Activated CD8-positive, alpha-beta T cell treated with anti-CD3 and anti-CD28 coated beads, Interleukin-2, amount 10 ng/mL, durations not matched to agents 7 days and 5 days (primary cell): ENCODE measurements at regions of chr3 and their contacts with region 1.

Region 1: GRCh38 chr3:150603153-150603979 is at the start of gene SELENOT:
- DNase-seq: peak; percentile 95
- ATAC-seq: peak; percentile 92
- H3K4me3 Mint-ChIP-seq: peak within 1 kb of the TSS; percentile 92
- H3K27ac Mint-ChIP-seq: peak within 1 kb of the TSS; percentile 99
- H3K4me1 Mint-ChIP-seq: peaks cover 66% of the 10 kb centered on the region
- H3K27me3 Mint-ChIP-seq: no peaks in the 10 kb centered on the region
- total RNA-seq, gene SELENOT: 99.8 to 104 TPM

Region 2: DNA sequence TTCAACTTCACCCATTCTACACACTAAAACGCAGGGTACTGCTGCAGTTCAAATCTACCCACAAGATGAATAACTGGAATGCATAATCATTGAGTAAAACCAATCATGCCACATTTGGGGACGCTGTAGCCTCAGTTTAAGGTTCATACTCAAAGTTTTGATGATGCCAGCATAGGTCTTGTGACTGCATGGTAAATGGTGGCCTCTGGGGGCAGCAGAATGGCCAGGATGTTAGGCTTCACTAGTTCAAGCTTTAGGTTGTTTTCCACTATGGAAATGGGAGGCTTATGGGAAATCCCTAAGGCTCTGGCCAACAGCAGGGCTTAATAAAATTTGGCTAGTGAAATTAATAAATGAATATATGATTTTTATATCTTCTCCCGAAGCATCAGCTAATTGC is 299.6 kb before region 1 on chr3:
- CTCF ChIA-PET with region 1: no interaction called
- POLR2A ChIA-PET with region 1: no interaction called
- DNase-seq: no peak
- ATAC-seq: no peak
- H3K4me3 Mint-ChIP-seq: no peak overlapping the region
- H3K27ac Mint-ChIP-seq: no peak overlapping the region
- H3K4me1 Mint-ChIP-seq: no peaks in the 10 kb centered on the region
- H3K27me3 Mint-ChIP-seq: peaks cover 39% of the 10 kb centered on the region

Region 3: DNA sequence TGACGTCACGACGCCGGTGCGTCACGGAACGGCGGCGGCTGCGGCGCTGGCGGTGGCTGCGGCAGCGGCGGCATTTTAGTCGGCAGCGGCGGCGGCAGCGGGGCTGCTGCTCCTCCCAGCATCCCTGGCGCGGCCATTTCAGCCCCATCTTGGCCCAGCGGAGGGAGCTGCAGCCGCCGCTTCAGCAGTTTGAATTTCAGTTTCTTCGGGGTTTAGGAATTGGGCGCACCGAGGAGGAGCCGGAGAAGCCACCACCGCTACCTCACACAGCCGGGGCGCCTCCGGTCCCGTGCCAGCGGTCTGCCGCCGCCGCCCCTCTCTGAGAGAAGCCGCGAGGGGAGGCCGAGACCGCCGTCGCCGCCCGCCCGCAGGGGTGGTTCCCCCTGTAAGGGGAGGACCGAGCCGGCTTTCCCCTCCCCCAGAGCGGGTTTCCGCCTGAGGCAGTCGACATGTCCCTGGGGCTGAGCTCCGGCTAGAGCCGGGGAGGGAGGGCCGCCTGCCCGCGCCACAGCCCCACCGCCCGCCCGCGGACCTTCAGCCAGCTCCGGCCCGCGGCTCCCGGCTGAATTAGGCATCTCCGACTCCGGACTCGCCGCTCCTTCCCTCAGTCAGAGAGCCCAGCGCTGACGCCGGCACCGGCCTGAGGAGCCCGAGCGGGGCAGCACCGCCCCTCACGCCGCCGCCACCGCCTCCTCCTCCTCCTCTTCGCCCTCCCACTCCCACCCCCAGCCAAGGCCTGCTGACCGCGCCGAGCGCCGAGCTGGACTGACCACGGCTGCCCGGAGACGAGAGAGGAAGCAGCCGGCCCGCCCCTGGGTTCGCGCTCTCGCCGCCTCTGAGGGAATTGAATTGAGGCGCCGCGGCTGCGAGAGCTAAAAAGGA is 194.9 kb before region 1 on chr3 and contains the start of gene TSC22D2:
- CTCF ChIA-PET with region 1: no interaction called
- POLR2A ChIA-PET with region 1: interaction called, 11 read pairs
- DNase-seq: peak; percentile 93
- ATAC-seq: peak; percentile 69
- H3K4me3 Mint-ChIP-seq: peak within 1 kb of the TSS; percentile 92
- H3K27ac Mint-ChIP-seq: peak within 1 kb of the TSS; percentile 86
- H3K4me1 Mint-ChIP-seq: peaks cover 29% of the 10 kb centered on the region
- H3K27me3 Mint-ChIP-seq: peaks cover 3% of the 10 kb centered on the region
- total RNA-seq, gene TSC22D2: 8.6 to 8.9 TPM

Region 4: DNA sequence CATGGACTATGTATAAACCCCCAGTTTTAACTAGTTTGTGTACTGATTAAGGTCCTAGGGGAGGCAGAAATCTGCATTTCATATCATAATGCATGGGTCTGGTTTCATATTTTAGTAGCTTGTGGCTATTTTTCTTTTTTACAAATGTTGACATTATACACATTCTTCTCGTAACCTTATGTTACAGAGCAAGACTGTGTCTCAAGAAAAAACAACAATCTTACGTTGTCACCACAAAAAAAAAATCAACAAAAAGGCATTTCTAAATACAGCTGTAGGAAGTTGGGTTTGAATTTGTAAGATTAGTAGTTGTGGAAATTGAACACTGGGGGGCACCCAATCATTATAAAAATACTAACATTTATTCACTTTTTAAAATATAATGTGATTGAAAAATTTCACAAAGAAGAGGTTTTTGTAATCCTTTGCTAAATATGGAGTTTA is 75.0 kb before region 1 on chr3:
- CTCF ChIA-PET with region 1: no interaction called
- POLR2A ChIA-PET with region 1: no interaction called
- DNase-seq: no peak
- ATAC-seq: no peak
- H3K4me3 Mint-ChIP-seq: no peak overlapping the region
- H3K27ac Mint-ChIP-seq: no peak overlapping the region
- H3K4me1 Mint-ChIP-seq: peaks cover 5% of the 10 kb centered on the region
- H3K27me3 Mint-ChIP-seq: peaks cover 4% of the 10 kb centered on the region

Region 5: DNA sequence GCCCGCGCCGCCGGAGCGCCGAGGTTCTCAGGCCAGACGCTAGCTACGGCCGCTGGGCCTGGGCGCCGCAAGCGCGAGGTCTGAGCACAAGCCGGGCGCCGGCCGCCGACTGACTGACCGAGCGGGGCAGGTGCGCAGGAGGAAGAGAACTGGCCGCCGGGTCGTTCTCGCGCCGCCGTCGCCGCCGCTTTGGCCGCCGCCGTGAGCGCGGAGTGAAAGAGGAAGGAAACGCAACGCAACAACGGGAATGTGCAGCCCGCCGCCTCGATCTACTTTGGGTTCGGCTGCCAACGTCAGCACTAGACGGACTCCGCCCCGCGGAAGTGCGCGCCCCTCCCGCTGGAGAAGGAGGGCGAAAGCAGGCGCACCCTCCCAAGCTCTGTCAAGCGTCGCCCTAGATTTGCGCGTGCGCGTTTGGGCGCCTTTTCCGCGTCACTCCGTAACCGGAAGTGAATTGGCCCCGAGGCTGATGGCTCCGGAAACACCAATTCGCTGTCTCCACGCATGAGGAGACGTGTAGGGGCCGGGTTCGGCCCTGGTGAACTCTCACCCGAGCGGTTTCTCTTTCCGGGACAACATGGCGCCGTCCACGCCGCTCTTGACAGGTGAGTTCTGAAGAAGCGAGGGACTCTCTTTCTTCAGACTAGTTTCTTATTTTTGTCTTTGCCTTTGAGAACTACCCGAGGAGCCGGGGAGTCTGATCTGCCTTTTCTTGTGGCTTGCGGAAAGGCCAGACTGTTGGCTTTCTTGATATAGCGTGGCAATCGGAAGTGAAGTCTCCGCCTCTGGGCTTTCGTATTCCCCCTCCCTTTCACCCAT is 56.9 kb before region 1 on chr3 and contains the starts of genes EIF2A and SERP1:
- CTCF ChIA-PET with region 1: no interaction called
- POLR2A ChIA-PET with region 1: interaction called, 43 read pairs
- DNase-seq: peak; percentile 99
- ATAC-seq: peak; percentile 93
- H3K4me3 Mint-ChIP-seq: peak within 1 kb of the TSS; percentile 94
- H3K27ac Mint-ChIP-seq: peak within 1 kb of the TSS; percentile 92
- H3K4me1 Mint-ChIP-seq: peaks cover 51% of the 10 kb centered on the region
- H3K27me3 Mint-ChIP-seq: no peaks in the 10 kb centered on the region
- total RNA-seq, gene EIF2A: 77.0 to 89.0 TPM
- total RNA-seq, gene SERP1: 83.4 to 87.3 TPM

Region 6: GRCh38 chr3:150582620-150583019 is 20.7 kb before region 1 on chr3:
- CTCF ChIA-PET with region 1: no interaction called
- POLR2A ChIA-PET with region 1: interaction called, 24 read pairs
- DNase-seq: no peak
- ATAC-seq: no peak
- H3K4me3 Mint-ChIP-seq: no peak overlapping the region
- H3K27ac Mint-ChIP-seq: peak overlapping the region; percentile 12
- H3K4me1 Mint-ChIP-seq: peaks cover 14% of the 10 kb centered on the region
- H3K27me3 Mint-ChIP-seq: no peaks in the 10 kb centered on the region

Region 7: DNA sequence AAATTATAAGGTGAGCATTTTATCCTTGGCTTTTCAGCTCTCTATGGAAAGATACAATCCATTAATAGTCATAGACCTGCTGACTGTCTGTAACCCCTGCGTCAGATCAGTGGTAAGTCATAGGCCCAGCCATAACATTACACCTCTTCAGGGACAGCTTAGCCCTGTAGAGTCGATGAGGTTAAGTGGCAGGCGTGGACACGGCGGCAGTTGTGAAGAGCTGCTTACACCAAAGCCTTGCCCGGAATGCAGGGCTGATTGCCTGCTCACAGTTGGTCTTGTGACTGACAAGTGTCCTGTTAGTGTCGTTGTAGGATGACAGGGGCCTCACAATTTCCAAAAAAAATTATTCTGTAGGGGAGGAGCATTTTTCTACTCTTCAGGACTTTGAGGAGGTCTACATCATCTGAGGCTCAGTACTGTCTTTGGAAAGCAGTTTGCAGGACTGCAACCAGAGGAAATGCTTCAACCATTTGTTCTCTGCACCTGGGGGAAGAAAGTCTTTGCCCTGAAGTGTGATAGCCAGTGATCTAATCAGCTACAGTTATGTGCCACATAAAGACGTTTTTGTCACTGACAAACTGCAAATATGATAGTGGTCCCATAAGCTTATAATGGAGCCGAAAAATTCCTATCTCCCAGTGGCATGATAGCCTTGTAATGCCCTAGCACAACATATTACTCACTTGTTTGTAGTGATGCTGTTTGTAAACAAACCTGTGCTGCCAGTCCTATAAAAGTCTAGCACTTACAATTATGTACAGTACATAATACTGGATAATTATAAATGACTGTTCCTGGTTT is 15.1 kb before region 1 on chr3:
- CTCF ChIA-PET with region 1: interaction called, 3 read pairs
- POLR2A ChIA-PET with region 1: interaction called, 24 read pairs
- DNase-seq: no peak
- ATAC-seq: no peak
- H3K4me3 Mint-ChIP-seq: no peak overlapping the region
- H3K27ac Mint-ChIP-seq: no peak overlapping the region
- H3K4me1 Mint-ChIP-seq: peaks cover 6% of the 10 kb centered on the region
- H3K27me3 Mint-ChIP-seq: no peaks in the 10 kb centered on the region

Region 8: DNA sequence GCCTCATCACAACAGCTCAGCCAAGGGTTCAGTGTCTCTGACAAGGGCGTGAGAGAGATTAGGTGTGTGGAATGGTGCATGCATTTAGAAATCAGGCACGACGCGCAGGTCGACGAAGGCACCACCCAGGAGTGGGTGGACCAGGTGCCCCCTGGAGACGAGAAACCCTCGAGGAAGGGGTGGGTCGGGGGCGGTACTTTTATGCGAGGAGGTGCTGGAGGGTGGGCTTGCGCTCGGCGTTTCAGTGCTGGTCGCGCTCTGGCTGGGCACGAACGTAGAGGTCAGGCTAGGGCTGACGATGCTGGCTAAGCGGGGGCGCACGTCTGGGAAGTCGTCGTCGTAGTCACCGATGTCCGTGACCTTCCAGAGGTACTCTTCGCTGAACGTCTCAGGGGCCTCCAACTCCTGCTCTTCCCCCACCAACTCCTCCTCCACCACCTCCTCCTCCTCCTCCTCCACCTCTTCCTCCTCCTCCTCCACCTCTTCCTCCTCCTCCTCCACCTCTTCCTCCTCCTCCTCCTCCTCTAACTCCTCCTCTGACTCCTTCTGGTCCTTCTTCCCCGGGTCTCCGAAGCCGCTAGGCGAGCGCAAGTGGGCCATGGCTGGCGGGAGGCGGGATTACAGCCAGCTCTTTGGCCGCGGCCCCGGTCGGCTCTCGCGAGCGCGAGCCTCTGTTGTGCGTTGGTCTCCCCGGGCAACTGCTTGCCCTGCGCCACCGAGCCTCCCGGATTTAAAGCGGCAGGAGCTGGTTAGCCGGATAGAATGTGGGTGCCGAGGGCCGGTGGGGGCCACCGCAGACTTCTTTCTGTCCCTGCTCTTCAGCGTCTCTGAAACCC is 100.2 kb after region 1 on chr3 and contains the start of gene ERICH6:
- CTCF ChIA-PET with region 1: interaction called, 3 read pairs
- POLR2A ChIA-PET with region 1: interaction called, 18 read pairs
- DNase-seq: peak; percentile 92
- ATAC-seq: peak; percentile 95
- H3K4me3 Mint-ChIP-seq: peak within 1 kb of the TSS; percentile 95
- H3K27ac Mint-ChIP-seq: peak within 1 kb of the TSS; percentile 99
- H3K4me1 Mint-ChIP-seq: peaks cover 32% of the 10 kb centered on the region
- H3K27me3 Mint-ChIP-seq: peaks cover 5% of the 10 kb centered on the region
- total RNA-seq, gene ERICH6: 0.21 to 0.60 TPM